CD8-positive, alpha-beta T cell (primary cell): ENCODE measurements at regions of chr4 and their contacts with region 1.

Region 1: GRCh38 chr4:128465523-128465922 is 177.9 kb upstream of the PGRMC2 start:
- DNase-seq: no peak
- ATAC-seq: no peak
- H3K4me3 ChIP-seq: no peak overlapping the region
- H3K4me3 Mint-ChIP-seq: no peak overlapping the region
- H3K27ac ChIP-seq: no peak overlapping the region
- H3K27ac Mint-ChIP-seq: no peak overlapping the region
- H3K4me1 ChIP-seq: no peaks in the 10 kb centered on the region
- H3K4me1 Mint-ChIP-seq: no peaks in the 10 kb centered on the region
- H3K27me3 ChIP-seq: no peaks in the 10 kb centered on the region
- H3K27me3 Mint-ChIP-seq: no peaks in the 10 kb centered on the region
- CTCF ChIP-seq: no peak

Region 2: GRCh38 chr4:128454281-128455075 is 11.0 kb before region 1 on chr4:
- CTCF ChIA-PET with region 1: interaction called, 11 read pairs
- POLR2A ChIA-PET with region 1: interaction called, 4 read pairs
- intact Hi-C with region 1: no loop called
- DNase-seq: peak; percentile 21 to 80 (median 65)
- ATAC-seq: peak; percentile 100
- H3K4me3 ChIP-seq: no peak overlapping the region
- H3K4me3 Mint-ChIP-seq: no peak overlapping the region
- H3K27ac ChIP-seq: no peak overlapping the region
- H3K27ac Mint-ChIP-seq: no peak overlapping the region
- H3K4me1 ChIP-seq: no peaks in the 10 kb centered on the region
- H3K4me1 Mint-ChIP-seq: peaks cover 7% of the 10 kb centered on the region
- H3K27me3 ChIP-seq: no peaks in the 10 kb centered on the region
- H3K27me3 Mint-ChIP-seq: peaks cover 7% of the 10 kb centered on the region
- CTCF ChIP-seq: peak; percentile 65